AG04449 (cell line): ENCODE measurements at regions of chr6 and their contacts with region 1.

Region 1: DNA sequence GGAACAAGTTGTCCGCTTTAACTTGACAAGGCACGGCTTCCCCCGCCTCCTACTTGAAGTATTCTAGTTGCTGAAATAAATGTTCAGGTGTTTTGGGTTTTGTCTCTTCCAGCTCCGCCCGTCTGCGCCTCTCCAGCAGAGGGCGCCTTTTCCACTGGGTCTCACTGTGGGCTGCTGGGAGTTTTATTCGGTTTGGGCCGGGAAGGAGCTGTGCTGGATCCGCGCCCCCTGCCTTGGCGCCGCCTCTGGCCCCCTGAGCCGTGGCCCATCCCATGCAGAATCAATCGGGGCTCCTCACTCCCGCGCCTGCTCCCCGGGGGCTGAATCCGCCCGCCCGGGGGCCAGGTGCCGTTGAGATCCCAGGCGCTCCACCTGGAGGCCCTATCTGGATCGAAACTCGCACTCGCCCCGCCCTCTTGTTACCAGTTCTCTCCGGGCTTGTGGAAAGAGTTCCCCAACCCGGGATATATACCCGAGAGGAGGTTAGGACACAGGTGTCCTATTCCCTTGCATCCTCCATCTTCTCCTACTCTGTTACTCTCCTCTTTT is 51.0 kb upstream of the TCF21 start:
- DNase-seq: no peak
- H3K4me3 ChIP-seq: peak overlapping the region; percentile 50
- CTCF ChIP-seq: peak; percentile 63

Region 2: DNA sequence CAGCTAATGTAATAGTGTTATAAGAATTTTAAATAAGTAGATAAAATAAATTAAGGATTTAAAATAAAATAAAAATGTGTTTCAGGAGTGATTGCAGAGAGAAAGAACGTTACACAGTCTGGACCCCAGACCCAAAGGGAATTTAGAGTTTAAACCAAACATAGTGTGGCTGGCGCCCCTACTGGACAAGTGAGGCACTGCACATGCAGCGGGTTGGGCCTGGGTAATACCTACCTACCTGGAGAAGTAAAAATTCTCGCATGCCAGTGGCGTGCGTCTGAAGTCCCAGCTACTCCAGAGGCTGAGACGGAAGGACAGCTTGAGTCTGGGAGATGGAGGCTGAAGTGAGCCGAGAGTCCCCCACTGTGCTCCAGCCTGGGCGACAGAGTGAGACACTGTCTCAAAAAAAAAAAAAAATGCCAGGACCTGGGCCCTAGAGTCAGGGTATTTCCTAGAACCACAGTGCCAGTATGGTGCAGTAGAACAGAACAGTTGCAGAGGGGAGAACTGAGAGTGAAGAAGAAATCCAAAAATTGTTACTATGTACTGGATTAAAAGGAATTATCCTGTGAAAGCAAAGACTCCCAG is 20.3 kb before region 1 on chr6:
- CTCF ChIA-PET with region 1: interaction called, 17 read pairs
- POLR2A ChIA-PET with region 1: no interaction called
- DNase-seq: no peak
- H3K4me3 ChIP-seq: no peak overlapping the region
- CTCF ChIP-seq: peak; percentile 22

Region 3: DNA sequence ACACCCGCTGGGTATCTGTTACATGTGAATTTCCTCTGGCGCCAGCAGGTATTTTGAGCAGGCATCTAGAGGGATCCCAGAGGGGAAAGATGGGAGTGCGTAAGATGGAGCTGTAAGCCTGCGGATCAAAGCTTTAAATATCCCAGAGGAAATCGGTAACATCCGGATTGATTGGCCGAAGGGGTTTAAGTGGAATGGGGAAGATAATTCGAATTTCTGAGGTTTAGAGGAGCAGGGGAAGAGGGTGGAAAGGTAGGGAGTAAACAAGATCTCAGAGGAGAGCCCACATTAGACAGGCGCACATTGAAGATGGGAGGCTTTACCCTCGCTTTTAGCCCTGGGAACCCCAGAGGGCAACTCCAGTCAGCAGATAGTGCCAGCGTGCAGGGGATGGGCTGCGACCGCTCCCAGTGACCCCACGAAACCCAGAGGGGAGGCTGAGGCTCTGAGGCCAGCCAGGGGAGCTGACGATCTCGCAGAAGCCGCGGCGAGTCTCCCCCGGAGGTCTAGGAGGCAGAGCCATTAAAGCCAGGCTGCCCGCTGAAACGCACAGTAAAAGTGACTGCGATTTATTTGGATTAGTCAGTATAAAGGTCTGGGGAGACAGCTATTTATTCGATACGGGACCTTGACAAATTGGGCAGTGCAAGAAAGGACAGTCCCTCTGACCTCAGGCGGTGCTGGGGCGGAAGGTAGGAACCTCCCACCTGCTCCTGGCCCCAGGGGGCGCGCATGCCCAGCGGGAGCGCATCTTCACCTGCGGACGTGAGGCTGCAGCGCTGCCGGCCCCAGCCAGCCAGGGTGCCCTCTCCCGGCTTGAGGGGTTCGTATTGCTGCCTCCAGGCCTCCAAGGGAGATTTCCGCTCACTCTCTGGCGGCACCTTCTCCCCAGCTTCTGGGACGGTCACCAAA is 16.7 kb after region 1 on chr6:
- CTCF ChIA-PET with region 1: interaction called, 28 read pairs
- POLR2A ChIA-PET with region 1: no interaction called
- DNase-seq: no peak
- H3K4me3 ChIP-seq: peak overlapping the region; percentile 42
- CTCF ChIP-seq: no peak

Region 4: DNA sequence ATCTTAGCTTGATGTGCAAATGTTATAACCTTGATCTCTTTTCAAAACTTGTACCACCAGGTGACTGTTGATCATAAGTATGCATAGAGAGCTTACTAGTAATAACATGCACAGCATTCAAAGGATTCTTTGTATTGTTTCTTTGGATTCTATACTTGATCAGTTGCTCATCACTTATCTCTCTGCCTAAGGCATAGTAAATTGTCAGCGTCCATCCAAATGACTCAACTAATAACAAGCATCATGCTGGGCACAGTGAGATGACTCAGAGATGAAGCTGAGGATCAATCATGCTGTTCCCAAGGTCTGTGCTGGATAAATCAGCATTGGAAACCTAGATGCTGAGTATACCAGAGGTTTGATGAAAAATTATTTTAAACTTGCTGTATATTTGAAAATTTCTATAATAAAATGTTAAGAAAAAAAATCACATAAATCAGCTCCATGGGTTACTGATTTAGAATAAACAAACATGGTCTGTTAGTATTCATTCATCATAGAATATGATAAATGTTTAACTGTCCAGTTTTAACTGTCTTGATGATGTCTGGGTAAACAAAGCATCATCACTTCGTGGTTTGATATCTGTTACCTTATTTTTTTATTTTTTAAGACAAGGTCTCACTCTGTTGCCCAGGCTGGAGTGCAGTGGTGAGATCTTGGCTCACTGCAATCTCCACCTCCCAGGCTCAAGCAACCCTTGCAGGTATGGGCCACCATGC is 525.6 kb after region 1 on chr6:
- CTCF ChIA-PET with region 1: no interaction called
- POLR2A ChIA-PET with region 1: no interaction called
- DNase-seq: no peak
- H3K4me3 ChIP-seq: no peak overlapping the region
- CTCF ChIP-seq: no peak